Kidney (tissue), 22 donors: ENCODE measurements at regions of chr20 and their contacts with region 1.

Region 1: DNA sequence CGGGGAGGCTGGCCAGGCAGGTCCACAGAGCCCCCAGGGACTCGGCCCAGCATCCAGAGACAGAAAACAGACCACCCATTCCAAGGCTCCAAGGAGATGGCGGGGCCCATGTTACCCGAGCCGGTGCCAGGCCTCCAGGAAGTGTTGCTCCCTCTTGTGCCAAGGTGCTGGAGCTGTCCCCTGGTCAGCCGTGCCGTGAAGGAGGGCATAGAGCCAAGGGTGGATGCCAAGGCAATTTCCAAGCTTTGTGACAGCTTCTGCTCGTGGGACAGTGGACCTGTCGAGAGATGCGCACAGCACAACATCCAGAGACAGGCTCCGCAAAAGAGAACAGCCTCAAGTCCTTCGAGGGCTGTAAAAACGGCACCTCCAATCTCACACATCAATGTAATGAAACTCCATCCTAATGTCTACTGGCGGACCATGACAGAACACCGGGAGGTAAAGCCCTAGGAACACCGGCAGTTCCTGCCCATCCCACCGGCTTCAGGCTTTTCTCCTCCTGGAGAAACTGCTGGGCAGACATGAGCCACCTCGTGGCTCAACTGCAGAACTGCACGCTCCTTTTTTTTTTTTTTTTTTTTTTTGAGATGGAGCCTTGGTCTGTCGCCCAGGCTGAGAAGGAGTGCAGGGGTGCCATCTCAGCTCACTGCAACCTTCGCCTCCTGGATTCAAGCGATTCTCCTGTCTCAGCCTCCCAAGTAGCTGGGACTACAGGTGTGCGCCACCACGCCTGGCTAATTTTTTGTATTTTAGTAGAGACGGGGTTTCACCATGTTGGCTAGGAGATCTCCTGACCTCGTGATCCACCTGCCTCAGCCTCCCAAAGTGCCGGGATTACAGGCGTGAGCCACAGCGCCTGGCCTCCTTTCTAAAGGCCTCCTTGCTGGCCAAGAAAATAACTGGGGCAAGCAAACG is 30.9 kb upstream of the AVP start:
- DNase-seq: peak; percentile 62 to 74 (median 67)
- H3K4me3 ChIP-seq: no peak overlapping the region
- H3K27ac ChIP-seq: no peak overlapping the region
- H3K4me1 ChIP-seq: no peaks in the 10 kb centered on the region
- H3K27me3 ChIP-seq: no peaks in the 10 kb centered on the region
- CTCF ChIP-seq: peak; percentile 79

Region 2: GRCh38 chr20:3051385-3052019 is 63.9 kb before region 1 on chr20:
- intact Hi-C with region 1: loop called (anchors 10 kb)
- DNase-seq: no peak
- H3K4me3 ChIP-seq: no peak overlapping the region
- H3K27ac ChIP-seq: no peak overlapping the region
- H3K4me1 ChIP-seq: peaks cover 0 to 9% (median 0%) of the 10 kb centered on the region in 3 donors
- H3K27me3 ChIP-seq: no peaks in the 10 kb centered on the region
- CTCF ChIP-seq: no peak